Naive thymus-derived CD4-positive, alpha-beta T cell (primary cell): ENCODE measurements at regions of chr5 and their contacts with region 1.

Region 1: GRCh38 chr5:81194633-81195333 is 38.3 kb upstream of the CKMT2 start:
- DNase-seq: peak; percentile 58 to 83 (median 74)
- ATAC-seq: peak; percentile 98
- H3K4me3 ChIP-seq: no peak overlapping the region
- H3K4me3 Mint-ChIP-seq: peak overlapping the region in 8 of 10 donors; percentile 21 to 65 (median 47)
- H3K27ac ChIP-seq: no peak overlapping the region
- H3K27ac Mint-ChIP-seq: peak overlapping the region in 7 of 9 donors; percentile 21 to 82 (median 68)
- H3K4me1 ChIP-seq: peaks cover 0 to 6% of the 10 kb centered on the region in 2 donors
- H3K4me1 Mint-ChIP-seq: peaks cover 3 to 16% (median 9%) of the 10 kb centered on the region in 7 donors
- H3K27me3 ChIP-seq: no peaks in the 10 kb centered on the region
- H3K27me3 Mint-ChIP-seq: no peaks in the 10 kb centered on the region

Region 2: DNA sequence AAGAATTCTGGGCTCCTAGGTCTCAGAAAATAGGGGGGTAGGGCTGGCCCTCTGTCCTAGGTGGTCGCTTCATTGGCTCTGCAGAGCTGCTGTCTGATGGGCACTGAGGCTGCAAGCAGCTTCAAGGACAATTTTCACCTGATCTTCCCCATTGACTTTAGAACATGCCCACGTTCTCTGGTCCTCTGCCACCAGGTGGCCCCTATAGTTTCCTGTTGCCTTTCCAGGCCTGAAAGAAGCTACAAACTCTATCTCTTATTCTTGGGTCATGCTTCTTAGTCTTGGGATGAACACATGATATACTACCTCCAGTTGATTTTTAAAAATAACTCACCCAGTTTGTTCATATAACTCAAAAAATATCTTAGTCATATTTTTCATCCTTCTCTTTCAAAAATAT is 848.7 kb before region 1 on chr5:
- CTCF ChIA-PET with region 1: no interaction called
- POLR2A ChIA-PET with region 1: no interaction called
- intact Hi-C with region 1: loop called (anchors 2 to 10 kb)
- DNase-seq: peak in 8 of 9 donors; percentile 6 to 44 (median 30)
- ATAC-seq: peak; percentile 63
- H3K4me3 ChIP-seq: no peak overlapping the region
- H3K4me3 Mint-ChIP-seq: no peak overlapping the region
- H3K27ac ChIP-seq: no peak overlapping the region
- H3K27ac Mint-ChIP-seq: no peak overlapping the region
- H3K4me1 ChIP-seq: no peaks in the 10 kb centered on the region
- H3K4me1 Mint-ChIP-seq: peaks cover 0 to 6% (median 3%) of the 10 kb centered on the region in 7 donors
- H3K27me3 ChIP-seq: no peaks in the 10 kb centered on the region
- H3K27me3 Mint-ChIP-seq: peaks cover 6 to 11% (median 8%) of the 10 kb centered on the region in 5 donors

Region 3: GRCh38 chr5:80481019-80481893 is 713.5 kb before region 1 on chr5:
- CTCF ChIA-PET with region 1: no interaction called
- POLR2A ChIA-PET with region 1: no interaction called
- intact Hi-C with region 1: loop called (anchors 1 to 2 kb)
- DNase-seq: peak in 5 of 9 donors; percentile 18 to 41 (median 30)
- ATAC-seq: peak; percentile 85
- H3K4me3 ChIP-seq: no peak overlapping the region
- H3K4me3 Mint-ChIP-seq: no peak overlapping the region
- H3K27ac ChIP-seq: no peak overlapping the region
- H3K27ac Mint-ChIP-seq: peak overlapping the region in 1 of 9 donors; percentile 47
- H3K4me1 ChIP-seq: no peaks in the 10 kb centered on the region
- H3K4me1 Mint-ChIP-seq: peaks cover 0 to 7% (median 0%) of the 10 kb centered on the region in 7 donors
- H3K27me3 ChIP-seq: no peaks in the 10 kb centered on the region
- H3K27me3 Mint-ChIP-seq: peaks cover 0 to 3% (median 0%) of the 10 kb centered on the region in 5 donors

Region 4: DNA sequence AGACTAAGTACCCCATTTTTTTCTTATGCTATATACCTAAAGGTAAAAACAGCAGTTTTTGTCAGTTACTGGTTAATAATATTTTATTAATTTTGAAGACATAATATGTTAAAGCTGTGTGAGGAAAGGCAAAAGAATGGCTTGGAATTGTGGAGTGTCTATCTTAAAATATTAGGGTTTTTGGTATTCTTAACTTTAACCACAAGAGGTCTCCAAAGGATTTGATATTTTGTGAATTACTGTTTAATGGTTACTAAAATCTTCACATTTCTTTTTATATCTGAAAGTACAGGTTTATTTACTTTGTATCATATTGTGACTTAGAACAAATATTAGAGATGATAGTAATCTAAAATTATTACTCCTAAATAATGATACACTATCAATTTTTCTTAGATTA is 508.0 kb before region 1 on chr5:
- CTCF ChIA-PET with region 1: interaction called, 6 read pairs
- POLR2A ChIA-PET with region 1: interaction called, 5 read pairs
- intact Hi-C with region 1: loop called (anchors 1 kb)
- DNase-seq: peak in 5 of 9 donors; percentile 11 to 42 (median 19)
- ATAC-seq: no peak
- H3K4me3 ChIP-seq: no peak overlapping the region
- H3K4me3 Mint-ChIP-seq: no peak overlapping the region
- H3K27ac ChIP-seq: no peak overlapping the region
- H3K27ac Mint-ChIP-seq: no peak overlapping the region
- H3K4me1 ChIP-seq: no peaks in the 10 kb centered on the region
- H3K4me1 Mint-ChIP-seq: peaks cover 7 to 35% (median 14%) of the 10 kb centered on the region in 7 donors
- H3K27me3 ChIP-seq: no peaks in the 10 kb centered on the region
- H3K27me3 Mint-ChIP-seq: no peaks in the 10 kb centered on the region

Region 5: GRCh38 chr5:80711938-80712337 is 482.8 kb before region 1 on chr5:
- CTCF ChIA-PET with region 1: no interaction called
- POLR2A ChIA-PET with region 1: no interaction called
- intact Hi-C with region 1: loop called in 1 of 2 experiments (anchors 1 kb)
- DNase-seq: no peak
- ATAC-seq: no peak
- H3K4me3 ChIP-seq: no peak overlapping the region
- H3K4me3 Mint-ChIP-seq: no peak overlapping the region
- H3K27ac ChIP-seq: no peak overlapping the region
- H3K27ac Mint-ChIP-seq: peak overlapping the region in 1 of 9 donors; percentile 72
- H3K4me1 ChIP-seq: no peaks in the 10 kb centered on the region
- H3K4me1 Mint-ChIP-seq: peaks cover 0 to 42% (median 4%) of the 10 kb centered on the region in 7 donors
- H3K27me3 ChIP-seq: no peaks in the 10 kb centered on the region
- H3K27me3 Mint-ChIP-seq: no peaks in the 10 kb centered on the region

Region 6: DNA sequence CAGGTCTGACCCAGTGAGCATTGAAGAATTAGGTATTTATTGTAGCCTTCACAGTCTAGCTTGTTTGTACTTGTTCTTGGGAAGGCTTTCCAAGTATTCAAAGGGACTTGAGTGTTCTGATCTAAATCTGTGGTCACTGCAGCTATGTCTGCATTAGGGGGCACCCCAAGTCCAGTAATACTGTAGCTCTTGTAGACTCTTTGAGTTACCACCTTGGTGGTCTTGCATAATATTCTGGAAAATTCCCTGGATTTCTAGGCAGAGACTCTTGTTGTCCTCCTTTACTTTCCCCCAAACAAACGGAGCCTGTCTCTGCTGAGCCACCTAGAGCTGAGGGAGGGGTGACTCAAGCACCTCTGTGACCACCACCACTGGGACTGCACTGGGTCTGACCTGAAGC is 390.5 kb before region 1 on chr5:
- CTCF ChIA-PET with region 1: no interaction called
- POLR2A ChIA-PET with region 1: no interaction called
- intact Hi-C with region 1: loop called in 1 of 2 experiments (anchors 10 kb)
- DNase-seq: peak in 1 of 9 donors; percentile 5
- ATAC-seq: no peak
- H3K4me3 ChIP-seq: no peak overlapping the region
- H3K4me3 Mint-ChIP-seq: no peak overlapping the region
- H3K27ac ChIP-seq: no peak overlapping the region
- H3K27ac Mint-ChIP-seq: peak overlapping the region in 1 of 9 donors; percentile 57
- H3K4me1 ChIP-seq: no peaks in the 10 kb centered on the region
- H3K4me1 Mint-ChIP-seq: peaks cover 0 to 13% (median 0%) of the 10 kb centered on the region in 7 donors
- H3K27me3 ChIP-seq: no peaks in the 10 kb centered on the region
- H3K27me3 Mint-ChIP-seq: no peaks in the 10 kb centered on the region

Region 7: DNA sequence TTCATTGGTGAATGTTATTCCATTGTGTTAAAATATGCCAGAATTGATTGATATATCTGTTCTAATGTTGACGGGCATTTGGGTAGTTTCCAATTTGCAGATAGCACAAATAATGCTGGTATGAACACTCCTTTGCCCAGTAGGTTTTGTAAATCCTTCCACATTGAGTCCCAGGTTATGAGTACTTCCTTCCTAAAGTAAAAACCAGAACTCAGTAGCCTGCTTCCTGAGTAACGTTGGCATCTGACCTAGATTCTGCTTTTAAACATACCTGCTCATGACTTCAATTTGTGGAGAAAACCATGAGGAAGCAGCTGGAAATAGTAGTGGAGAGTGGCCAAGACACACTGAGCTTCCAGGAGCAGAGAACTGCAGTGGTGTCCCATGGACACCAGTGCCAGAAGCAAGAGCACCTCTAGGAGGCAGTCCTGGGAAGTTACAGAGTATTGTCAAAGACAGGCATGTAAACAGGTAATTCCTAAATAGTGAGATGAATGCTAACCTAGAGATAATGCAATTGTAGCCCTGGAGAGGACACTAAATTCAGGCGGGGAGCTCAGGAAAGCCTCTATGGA is 258.9 kb before region 1 on chr5:
- CTCF ChIA-PET with region 1: no interaction called
- POLR2A ChIA-PET with region 1: no interaction called
- intact Hi-C with region 1: loop called in 1 of 2 experiments (anchors 1 kb)
- DNase-seq: peak in 1 of 9 donors; percentile 15
- ATAC-seq: no peak
- H3K4me3 ChIP-seq: no peak overlapping the region
- H3K4me3 Mint-ChIP-seq: no peak overlapping the region
- H3K27ac ChIP-seq: no peak overlapping the region
- H3K27ac Mint-ChIP-seq: peak overlapping the region in 2 of 9 donors; percentile 16 to 69
- H3K4me1 ChIP-seq: no peaks in the 10 kb centered on the region
- H3K4me1 Mint-ChIP-seq: peaks cover 0 to 13% (median 7%) of the 10 kb centered on the region in 7 donors
- H3K27me3 ChIP-seq: no peaks in the 10 kb centered on the region
- H3K27me3 Mint-ChIP-seq: no peaks in the 10 kb centered on the region

Region 8: GRCh38 chr5:81134066-81134465 is 60.7 kb before region 1 on chr5:
- CTCF ChIA-PET with region 1: no interaction called
- POLR2A ChIA-PET with region 1: no interaction called
- intact Hi-C with region 1: no loop called
- DNase-seq: no peak
- ATAC-seq: no peak
- H3K4me3 ChIP-seq: no peak overlapping the region
- H3K4me3 Mint-ChIP-seq: no peak overlapping the region
- H3K27ac ChIP-seq: no peak overlapping the region
- H3K27ac Mint-ChIP-seq: no peak overlapping the region
- H3K4me1 ChIP-seq: no peaks in the 10 kb centered on the region
- H3K4me1 Mint-ChIP-seq: peaks cover 0 to 13% (median 7%) of the 10 kb centered on the region in 7 donors
- H3K27me3 ChIP-seq: no peaks in the 10 kb centered on the region
- H3K27me3 Mint-ChIP-seq: no peaks in the 10 kb centered on the region

Region 9: DNA sequence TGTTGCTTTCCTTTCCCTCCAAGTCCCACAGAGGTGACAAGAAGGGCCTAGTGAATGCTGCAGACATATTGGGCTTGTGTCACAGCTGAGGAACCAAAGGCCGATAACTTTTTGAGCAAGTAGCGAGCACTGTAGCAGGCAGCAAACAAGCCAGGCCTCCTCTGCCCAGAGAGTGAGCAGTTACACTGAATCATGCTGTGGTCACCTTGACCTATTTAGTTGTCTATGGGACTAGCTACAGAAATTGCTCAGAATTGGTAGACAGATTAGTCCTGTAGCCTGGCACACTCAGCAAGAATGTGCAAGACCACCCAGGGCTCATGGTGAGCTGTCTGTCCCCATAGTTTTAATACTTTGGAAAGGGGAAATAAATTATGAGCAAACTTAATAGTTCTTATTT is 131.8 kb after region 1 on chr5:
- CTCF ChIA-PET with region 1: no interaction called
- POLR2A ChIA-PET with region 1: no interaction called
- intact Hi-C with region 1: no loop called
- DNase-seq: no peak
- ATAC-seq: no peak
- H3K4me3 ChIP-seq: no peak overlapping the region
- H3K4me3 Mint-ChIP-seq: no peak overlapping the region
- H3K27ac ChIP-seq: no peak overlapping the region
- H3K27ac Mint-ChIP-seq: no peak overlapping the region
- H3K4me1 ChIP-seq: no peaks in the 10 kb centered on the region
- H3K4me1 Mint-ChIP-seq: no peaks in the 10 kb centered on the region
- H3K27me3 ChIP-seq: peaks cover 0 to 2% of the 10 kb centered on the region in 2 donors
- H3K27me3 Mint-ChIP-seq: peaks cover 0 to 6% (median 0%) of the 10 kb centered on the region in 5 donors